ENCODE measurements at regions of chr7 and their contacts with region 1.

Region 1: DNA sequence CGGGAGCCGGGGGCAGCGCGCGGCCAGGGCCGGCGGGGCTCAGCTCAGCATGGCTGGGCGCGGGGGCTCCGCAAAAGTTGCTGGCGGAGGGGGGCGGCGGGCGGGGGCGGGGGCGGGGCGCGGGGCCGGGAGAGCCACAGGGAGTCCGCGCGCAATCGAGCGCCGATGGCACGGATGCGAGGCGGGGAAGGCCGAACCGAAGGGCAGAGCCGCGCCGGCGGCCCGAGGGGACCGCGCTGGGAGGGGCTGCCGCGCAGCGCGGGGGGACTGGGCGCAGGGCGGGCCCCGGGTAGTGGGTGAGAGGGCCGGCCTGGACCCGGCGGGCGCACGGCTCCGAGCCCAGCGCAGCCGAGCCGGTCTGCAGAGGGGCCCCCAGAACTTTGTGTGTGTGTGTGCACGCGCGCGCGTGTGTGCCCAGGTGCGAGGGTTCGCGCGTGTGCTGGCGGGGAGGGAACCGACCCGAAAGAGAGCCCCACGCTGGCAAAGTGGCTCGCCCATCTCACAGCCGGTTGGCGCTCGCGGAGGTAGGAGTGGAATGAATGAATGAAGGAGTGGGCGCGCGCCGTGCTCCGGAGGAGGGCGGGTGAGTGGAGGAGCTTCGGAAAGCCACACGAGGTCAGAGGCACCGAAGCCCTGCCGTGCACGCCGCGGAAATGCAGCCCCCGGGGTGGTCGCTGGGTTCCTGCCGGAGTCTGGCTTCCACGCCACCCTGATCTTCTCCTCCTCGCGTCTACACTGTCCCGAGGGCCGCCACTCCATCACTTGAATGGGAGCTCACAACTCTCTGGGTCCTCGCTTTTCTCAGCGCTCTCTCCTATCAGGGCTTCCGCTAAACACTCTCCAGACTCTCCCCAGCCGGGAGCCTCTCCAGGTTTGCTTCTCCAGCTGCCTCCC is at the start of gene HIPK2:
- DNase-seq: peak; percentile 68
- H3K4me3 Mint-ChIP-seq: peak within 1 kb of the TSS; percentile 96
- H3K27ac Mint-ChIP-seq: peak within 1 kb of the TSS; percentile 84
- H3K4me1 Mint-ChIP-seq: peaks cover 36% of the 10 kb centered on the region
- H3K27me3 Mint-ChIP-seq: peaks cover 14% of the 10 kb centered on the region
- total RNA-seq, gene HIPK2: 16.8 to 17.3 TPM

Region 2: DNA sequence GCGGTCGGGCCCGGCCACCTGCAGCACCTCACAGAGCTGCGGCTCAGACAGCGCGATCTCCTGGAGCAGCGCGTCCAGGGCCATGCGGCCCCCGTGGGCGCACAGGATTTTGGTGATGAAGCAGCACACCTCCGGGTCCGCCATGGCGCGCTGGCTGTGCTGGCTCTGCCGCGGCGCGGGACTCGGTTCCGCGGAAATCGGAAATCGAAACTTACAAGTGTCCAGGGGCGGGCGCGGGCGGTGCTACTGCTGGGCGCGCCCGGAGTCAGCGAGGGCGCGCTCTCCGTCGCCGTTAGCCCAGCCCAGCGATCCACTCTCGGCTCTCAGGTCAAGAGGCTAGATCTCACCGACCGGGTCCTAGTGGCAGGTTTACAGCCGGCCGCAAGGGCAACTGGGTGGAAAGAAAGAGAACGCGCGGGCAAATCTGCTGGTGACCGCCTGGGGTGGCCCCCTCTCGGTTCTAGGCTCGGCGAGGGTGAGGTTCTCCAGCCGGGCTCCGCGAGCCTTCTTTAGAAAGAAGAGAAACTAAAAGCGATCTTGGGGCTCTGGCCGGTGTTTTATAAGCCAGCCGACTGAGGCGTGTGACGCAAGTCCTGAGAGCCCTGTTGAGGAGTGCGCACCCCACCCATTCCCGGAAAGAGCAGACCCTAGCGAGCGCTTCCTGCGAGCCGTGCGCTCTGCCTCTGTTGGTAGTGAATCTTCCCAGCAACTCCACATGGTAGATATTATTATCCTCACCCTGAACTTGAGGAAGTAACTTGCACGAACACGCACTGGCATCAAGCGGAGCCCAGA is 668.8 kb before region 1 on chr7 and contains the start of gene ZC3HAV1:
- CTCF ChIA-PET with region 1: no interaction called
- intact Hi-C with region 1: loop called (anchors 2 kb)
- DNase-seq: peak; percentile 90
- H3K4me3 Mint-ChIP-seq: peak within 1 kb of the TSS; percentile 92
- H3K27ac Mint-ChIP-seq: peak within 1 kb of the TSS; percentile 95
- H3K4me1 Mint-ChIP-seq: peaks cover 34% of the 10 kb centered on the region
- H3K27me3 Mint-ChIP-seq: no peaks in the 10 kb centered on the region
- total RNA-seq, gene ZC3HAV1: 131 to 134 TPM

Region 3: GRCh38 chr7:139396323-139396951 is 381.8 kb before region 1 on chr7:
- CTCF ChIA-PET with region 1: no interaction called
- intact Hi-C with region 1: no loop called
- DNase-seq: no peak
- H3K4me3 Mint-ChIP-seq: no peak overlapping the region
- H3K27ac Mint-ChIP-seq: no peak overlapping the region
- H3K4me1 Mint-ChIP-seq: peaks cover 41% of the 10 kb centered on the region
- H3K27me3 Mint-ChIP-seq: no peaks in the 10 kb centered on the region

Region 4: DNA sequence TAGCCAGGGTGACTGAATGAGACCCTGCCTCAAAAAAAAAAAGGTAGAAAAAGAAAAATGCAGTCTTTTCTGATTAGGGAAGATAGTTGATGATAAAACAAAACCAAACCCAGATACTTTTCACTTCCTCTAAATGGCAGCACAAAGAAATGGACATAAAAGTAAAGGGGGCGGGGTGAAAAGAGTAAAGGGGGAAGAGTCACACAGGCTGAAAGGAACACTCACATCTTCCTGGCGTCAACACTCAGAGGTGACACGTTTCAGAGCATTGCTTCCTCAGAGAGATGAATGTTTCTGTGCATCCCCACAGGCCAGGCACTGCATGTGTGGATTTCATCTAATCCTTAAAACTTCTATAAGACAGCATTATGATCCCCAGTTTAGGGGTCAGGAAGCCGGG is 81.6 kb before region 1 on chr7:
- CTCF ChIA-PET with region 1: interaction called, 3 read pairs
- intact Hi-C with region 1: loop called (anchors 1 kb)
- DNase-seq: peak; percentile 78
- H3K4me3 Mint-ChIP-seq: no peak overlapping the region
- H3K27ac Mint-ChIP-seq: peak overlapping the region; percentile 81
- H3K4me1 Mint-ChIP-seq: peaks cover 30% of the 10 kb centered on the region
- H3K27me3 Mint-ChIP-seq: no peaks in the 10 kb centered on the region

Region 5: DNA sequence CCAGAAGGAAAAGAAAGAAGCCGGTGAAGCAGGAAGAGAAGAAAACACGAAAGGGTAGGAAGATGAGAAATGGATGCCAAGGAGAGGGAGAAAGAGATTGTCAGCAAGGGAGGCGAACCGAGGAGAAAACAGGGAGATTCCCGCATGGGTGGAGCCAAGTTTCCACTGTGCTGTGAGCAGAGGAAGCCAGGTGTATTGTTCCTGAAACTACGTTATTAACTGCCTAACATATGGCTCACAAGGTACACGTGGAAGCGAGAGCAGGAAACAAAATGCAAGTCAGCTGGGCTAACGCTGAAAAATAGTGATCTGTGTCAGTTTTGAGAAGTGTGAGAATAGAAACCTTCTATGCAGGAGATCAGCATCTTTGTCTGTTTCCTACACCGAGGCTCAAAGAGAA is 20.0 kb after region 1 on chr7:
- CTCF ChIA-PET with region 1: interaction called, 3 read pairs
- intact Hi-C with region 1: loop called (anchors 2 kb)
- DNase-seq: peak; percentile 69
- H3K4me3 Mint-ChIP-seq: peak overlapping the region; percentile 22
- H3K27ac Mint-ChIP-seq: no peak overlapping the region
- H3K4me1 Mint-ChIP-seq: peaks cover 14% of the 10 kb centered on the region
- H3K27me3 Mint-ChIP-seq: no peaks in the 10 kb centered on the region

Region 6: DNA sequence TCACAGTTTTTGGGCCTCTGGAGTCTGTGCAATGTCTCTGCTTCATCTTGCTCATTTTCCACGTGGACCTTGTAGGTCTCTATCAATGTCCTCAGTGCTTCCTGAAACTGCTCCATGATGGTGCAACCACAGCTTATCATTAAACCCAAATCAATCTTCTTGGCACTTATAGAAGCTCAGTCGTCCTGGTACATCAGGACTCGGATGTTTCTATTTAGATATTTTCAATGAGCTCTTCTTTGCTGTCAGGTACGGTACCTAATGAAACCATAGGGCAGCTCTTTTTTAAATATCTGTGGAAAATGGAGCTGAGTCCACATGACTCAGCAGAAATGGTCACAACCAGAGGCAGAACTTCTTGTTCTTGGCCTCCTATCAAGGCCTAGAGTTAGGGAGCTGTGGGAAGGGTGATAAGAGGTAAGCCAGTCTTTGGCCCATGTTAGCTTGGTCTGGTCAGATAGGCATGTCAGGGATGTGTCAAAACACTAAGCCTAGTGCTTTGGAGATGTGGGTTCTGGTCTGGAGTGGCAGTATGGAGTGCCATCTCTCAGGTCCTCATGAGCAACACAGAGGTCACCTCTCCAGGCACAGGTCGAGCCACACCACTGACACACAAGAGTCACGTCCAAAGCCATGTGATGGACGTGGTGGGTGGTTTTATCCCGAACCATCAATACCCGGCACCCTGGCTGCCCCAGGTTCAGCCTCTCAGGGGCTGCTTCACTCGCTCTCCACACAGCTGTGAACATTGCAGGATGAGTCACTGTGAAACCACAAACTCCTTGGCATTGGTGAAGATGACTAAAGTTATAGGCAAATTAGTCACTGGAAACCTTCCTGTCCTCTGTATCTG is 137.9 kb after region 1 on chr7:
- CTCF ChIA-PET with region 1: interaction called, 5 read pairs
- intact Hi-C with region 1: loop called (anchors 1 kb)
- DNase-seq: peak; percentile 87
- H3K4me3 Mint-ChIP-seq: no peak overlapping the region
- H3K27ac Mint-ChIP-seq: peak overlapping the region; percentile 19
- H3K4me1 Mint-ChIP-seq: peaks cover 24% of the 10 kb centered on the region
- H3K27me3 Mint-ChIP-seq: peaks cover 2% of the 10 kb centered on the region

Region 7: DNA sequence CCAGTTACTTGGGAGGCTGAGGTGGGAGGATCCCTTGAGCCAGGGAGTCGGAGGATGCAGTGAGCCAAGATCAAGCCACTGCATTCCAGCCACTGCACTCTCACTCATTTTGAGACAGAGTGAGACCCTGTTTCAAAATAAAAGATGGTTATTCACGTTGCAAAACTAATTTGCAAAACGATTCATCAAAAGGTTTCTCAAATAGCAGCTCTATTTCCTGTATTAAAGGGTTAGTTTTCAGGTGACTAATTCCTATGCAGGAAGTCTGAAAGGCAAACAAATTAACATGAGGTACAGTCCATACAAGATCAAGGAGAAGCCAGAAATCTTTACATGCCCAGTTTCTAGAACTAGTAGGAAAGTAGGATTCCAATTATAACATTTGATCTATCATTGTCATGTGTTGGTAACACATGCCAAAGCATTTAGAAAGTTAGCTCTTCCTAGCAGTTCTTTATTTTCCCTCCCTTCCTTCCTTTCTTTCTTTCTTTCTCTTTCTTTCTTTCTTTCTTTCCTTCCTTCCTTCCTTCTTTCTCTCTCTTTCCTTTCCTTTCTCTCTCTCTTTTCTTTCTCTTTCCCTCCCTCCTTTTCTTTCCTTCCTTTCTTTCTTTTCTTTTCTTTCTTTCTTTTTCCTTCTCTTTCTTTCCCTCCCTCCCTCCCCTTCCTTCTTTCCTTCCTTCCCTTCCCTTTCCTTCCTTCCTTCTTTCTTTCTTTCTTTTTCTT is 813.1 kb after region 1 on chr7:
- CTCF ChIA-PET with region 1: no interaction called
- intact Hi-C with region 1: no loop called
- DNase-seq: peak; percentile 12
- H3K4me3 Mint-ChIP-seq: no peak overlapping the region
- H3K27ac Mint-ChIP-seq: no peak overlapping the region
- H3K4me1 Mint-ChIP-seq: peaks cover 4% of the 10 kb centered on the region
- H3K27me3 Mint-ChIP-seq: no peaks in the 10 kb centered on the region

Measured in activated naive CD4-positive, alpha-beta T cell treated with anti-CD3 and anti-CD28 coated beads for 36 hours (primary cell).